ENCODE measurements at regions of chr10 and their contacts with region 1.

Region 1: DNA sequence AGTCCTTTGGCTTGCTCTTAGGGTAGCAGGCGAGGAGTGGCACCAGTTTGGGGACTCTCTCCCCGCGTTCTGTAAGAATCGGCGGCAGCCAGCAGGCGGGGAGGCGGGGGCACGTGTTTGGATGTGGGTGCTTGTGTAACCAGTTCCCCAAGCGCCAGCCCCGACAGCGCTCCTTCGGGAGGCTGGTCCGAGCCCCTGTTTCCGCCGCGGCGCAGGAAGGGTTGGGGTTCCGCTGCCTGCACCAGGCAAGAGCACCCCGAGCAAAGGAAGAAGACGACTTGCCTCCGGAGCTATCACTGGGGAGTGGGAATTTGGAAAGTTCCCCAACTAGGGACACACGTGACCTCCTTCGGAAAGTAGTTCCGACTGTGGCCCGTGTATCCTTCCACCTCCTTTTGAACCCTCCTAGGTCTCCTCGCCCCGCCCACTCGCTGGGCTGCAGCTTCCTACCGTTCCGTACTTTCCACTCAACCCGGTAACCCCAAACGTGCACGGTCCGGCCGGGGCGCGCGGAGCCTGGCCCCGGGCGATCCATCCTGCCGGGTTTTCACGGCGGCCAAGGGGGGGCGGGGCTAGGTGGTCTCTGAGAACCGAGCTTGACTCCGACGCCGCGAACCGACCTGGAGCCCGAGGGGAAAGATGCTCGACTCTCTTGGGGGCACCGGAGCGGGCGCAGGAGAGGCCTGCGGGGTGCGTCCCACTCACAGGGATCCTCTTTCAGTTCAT is 1.2 kb downstream of the KLLN start:
- DNase-seq: peak; percentile 92 to 96 (median 94)
- H3K4me3 ChIP-seq: peak overlapping the region; percentile 91 to 95
- H3K4me3 Mint-ChIP-seq: peak overlapping the region; percentile 95 to 99 (median 97)
- H3K27ac ChIP-seq: peak overlapping the region; percentile 69
- H3K27ac Mint-ChIP-seq: peak overlapping the region; percentile 93 to 99 (median 96)
- H3K4me1 ChIP-seq: peaks cover 35% of the 10 kb centered on the region
- H3K4me1 Mint-ChIP-seq: peaks cover 25 to 60% (median 32%) of the 10 kb centered on the region in 4 donors
- H3K27me3 ChIP-seq: no peaks in the 10 kb centered on the region
- H3K27me3 Mint-ChIP-seq: peaks cover 0 to 3% of the 10 kb centered on the region in 2 donors

Region 2: GRCh38 chr10:87878664-87879459 is 16.7 kb after region 1 on chr10:
- CTCF ChIA-PET with region 1: interaction called, 3 read pairs
- POLR2A ChIA-PET with region 1: interaction called, 42 read pairs
- intact Hi-C with region 1: no loop called
- DNase-seq: no peak
- H3K4me3 ChIP-seq: no peak overlapping the region
- H3K4me3 Mint-ChIP-seq: peak overlapping the region in 3 of 8 donors; percentile 4 to 36 (median 5)
- H3K27ac ChIP-seq: no peak overlapping the region
- H3K27ac Mint-ChIP-seq: peak overlapping the region in 1 of 7 donors; percentile 19
- H3K4me1 ChIP-seq: peaks cover 52% of the 10 kb centered on the region
- H3K4me1 Mint-ChIP-seq: peaks cover 30 to 56% (median 39%) of the 10 kb centered on the region in 4 donors
- H3K27me3 ChIP-seq: no peaks in the 10 kb centered on the region
- H3K27me3 Mint-ChIP-seq: no peaks in the 10 kb centered on the region

Region 3: DNA sequence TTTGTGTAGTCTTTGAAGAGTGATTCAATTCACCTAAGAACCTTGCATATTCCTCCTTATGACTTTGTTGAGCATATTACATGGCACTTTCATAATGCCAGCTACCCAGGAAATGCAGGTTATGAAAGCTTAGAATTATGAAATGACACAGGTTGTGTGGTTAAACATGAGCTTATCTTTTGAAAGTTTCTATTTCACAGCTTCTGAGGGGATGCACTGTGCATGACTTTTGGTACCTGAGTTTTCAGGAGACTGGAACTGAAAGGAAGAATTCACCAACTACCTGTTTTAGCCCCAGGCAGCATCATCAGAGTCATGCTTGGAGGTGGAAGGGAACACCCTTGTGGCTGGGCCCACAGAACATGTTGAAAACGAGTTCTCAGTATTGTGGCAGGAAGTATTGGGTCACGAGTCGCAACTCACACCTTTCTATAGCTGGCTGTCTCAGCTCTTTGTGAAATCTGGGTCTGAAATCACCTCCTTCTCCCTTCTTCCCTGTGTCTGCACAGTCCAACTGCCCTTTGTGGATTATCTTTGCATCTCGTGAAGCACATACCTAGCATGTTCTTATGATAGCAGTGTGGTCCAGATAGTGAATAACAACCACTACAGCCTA is 229.5 kb after region 1 on chr10:
- CTCF ChIA-PET with region 1: interaction called, 27 read pairs
- POLR2A ChIA-PET with region 1: interaction called, 66 read pairs
- intact Hi-C with region 1: loop called (anchors 1 kb)
- DNase-seq: peak; percentile 72 to 83 (median 82)
- H3K4me3 ChIP-seq: no peak overlapping the region
- H3K4me3 Mint-ChIP-seq: peak overlapping the region in 6 of 8 donors; percentile 2 to 80 (median 62)
- H3K27ac ChIP-seq: peak overlapping the region; percentile 34
- H3K27ac Mint-ChIP-seq: peak overlapping the region; percentile 82 to 94 (median 92)
- H3K4me1 ChIP-seq: peaks cover 39% of the 10 kb centered on the region
- H3K4me1 Mint-ChIP-seq: peaks cover 40 to 47% (median 44%) of the 10 kb centered on the region in 4 donors
- H3K27me3 ChIP-seq: no peaks in the 10 kb centered on the region
- H3K27me3 Mint-ChIP-seq: no peaks in the 10 kb centered on the region

Region 4: GRCh38 chr10:88386821-88387773 is 525.0 kb after region 1 on chr10:
- CTCF ChIA-PET with region 1: interaction called, 225 read pairs
- POLR2A ChIA-PET with region 1: interaction called, 158 read pairs
- intact Hi-C with region 1: loop called (anchors 1 kb)
- DNase-seq: peak in 3 of 5 donors; percentile 4 to 31 (median 13)
- H3K4me3 ChIP-seq: peak overlapping the region in 1 of 2 donors; percentile 42
- H3K4me3 Mint-ChIP-seq: peak overlapping the region in 1 of 8 donors; percentile 6
- H3K27ac ChIP-seq: peak overlapping the region; percentile 80
- H3K27ac Mint-ChIP-seq: no peak overlapping the region
- H3K4me1 ChIP-seq: peaks cover 77% of the 10 kb centered on the region
- H3K4me1 Mint-ChIP-seq: peaks cover 16 to 25% (median 21%) of the 10 kb centered on the region in 4 donors
- H3K27me3 ChIP-seq: no peaks in the 10 kb centered on the region
- H3K27me3 Mint-ChIP-seq: no peaks in the 10 kb centered on the region

Region 5: DNA sequence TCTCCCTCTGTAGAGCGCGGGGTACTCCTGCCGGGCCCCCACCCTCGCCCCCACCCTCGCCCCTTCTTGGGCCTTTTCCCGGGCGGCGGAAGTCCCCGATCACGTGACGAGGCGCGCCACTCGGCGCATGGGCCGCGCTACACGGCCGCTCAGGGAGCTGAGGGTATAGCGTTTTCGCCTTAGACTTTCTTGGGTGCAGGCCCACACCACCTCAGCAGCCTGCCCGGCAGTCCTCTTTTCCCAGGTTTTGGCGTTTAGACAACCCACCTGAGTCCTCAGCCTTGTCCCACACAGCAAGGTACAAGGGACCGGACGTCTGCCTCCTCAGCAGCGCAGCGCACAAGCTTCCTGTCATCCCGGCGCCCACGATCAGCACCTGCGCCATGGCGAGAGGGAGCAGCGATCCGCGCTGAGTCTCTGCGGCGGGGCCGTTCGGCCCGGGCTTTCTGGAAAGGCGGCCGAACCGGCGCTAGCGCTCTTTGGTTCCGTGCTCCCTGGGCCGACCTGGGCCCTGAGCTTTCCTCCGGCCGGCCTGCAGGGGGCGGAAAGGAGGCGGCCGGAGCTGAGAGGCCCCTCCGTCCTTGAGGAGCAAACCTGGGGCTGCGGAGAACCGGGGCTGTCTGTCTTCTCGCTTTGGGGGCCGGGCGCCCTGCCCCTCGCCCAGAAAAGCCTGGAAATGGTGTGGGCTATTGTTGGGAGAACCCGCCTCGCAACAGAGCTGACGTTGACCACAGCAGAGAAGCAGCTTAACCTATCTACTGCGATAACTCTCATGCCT is 720.9 kb after region 1 on chr10 and contains the start of gene RNLS:
- CTCF ChIA-PET with region 1: interaction called, 8 read pairs
- POLR2A ChIA-PET with region 1: interaction called, 25 read pairs
- intact Hi-C with region 1: no loop called
- DNase-seq: peak; percentile 60 to 73 (median 65)
- H3K4me3 ChIP-seq: peak within 1 kb of the TSS; percentile 72 to 89
- H3K4me3 Mint-ChIP-seq: peak within 1 kb of the TSS; percentile 91 to 96 (median 93)
- H3K27ac ChIP-seq: peak within 1 kb of the TSS; percentile 77
- H3K27ac Mint-ChIP-seq: peak within 1 kb of the TSS; percentile 78 to 96 (median 93)
- H3K4me1 ChIP-seq: peaks cover 7% of the 10 kb centered on the region
- H3K4me1 Mint-ChIP-seq: peaks cover 6 to 26% (median 14%) of the 10 kb centered on the region in 4 donors
- H3K27me3 ChIP-seq: no peaks in the 10 kb centered on the region
- H3K27me3 Mint-ChIP-seq: no peaks in the 10 kb centered on the region
- total RNA-seq, gene RNLS: 1.7 to 1.9 TPM

Region 6: GRCh38 chr10:88990384-88991160 is 1128.5 kb after region 1 on chr10 and contains the start of gene FAS:
- CTCF ChIA-PET with region 1: no interaction called
- POLR2A ChIA-PET with region 1: interaction called, 14 read pairs
- intact Hi-C with region 1: loop called (anchors 2 kb)
- DNase-seq: peak; percentile 80 to 95 (median 83)
- H3K4me3 ChIP-seq: peak within 1 kb of the TSS; percentile 68 to 81
- H3K4me3 Mint-ChIP-seq: peak within 1 kb of the TSS; percentile 95 to 100 (median 99)
- H3K27ac ChIP-seq: peak within 1 kb of the TSS; percentile 93
- H3K27ac Mint-ChIP-seq: peak within 1 kb of the TSS; percentile 96 to 100 (median 97)
- H3K4me1 ChIP-seq: peaks cover 71% of the 10 kb centered on the region
- H3K4me1 Mint-ChIP-seq: peaks cover 53 to 82% (median 63%) of the 10 kb centered on the region in 4 donors
- H3K27me3 ChIP-seq: no peaks in the 10 kb centered on the region
- H3K27me3 Mint-ChIP-seq: no peaks in the 10 kb centered on the region
- total RNA-seq, gene FAS: 42.4 to 44.2 TPM

Measured in CD4-positive, alpha-beta memory T cell (primary cell).